GM12878 (cell line): ENCODE measurements at regions of chr1 and their contacts with region 1.

Region 1: GRCh38 chr1:212566522-212567479 is 41.8 kb upstream of the ATF3 start:
- DNase-seq: peak; percentile 92
- ATAC-seq: peak; percentile 98
- H3K4me3 ChIP-seq: peak overlapping the region; percentile 58
- H3K27ac ChIP-seq: peak overlapping the region; percentile 72
- H3K4me1 ChIP-seq: peaks cover 20% of the 10 kb centered on the region
- H3K27me3 ChIP-seq: no peaks in the 10 kb centered on the region
- CTCF ChIP-seq: no peak
- EP300 ChIP-seq: peak; percentile 93
- POLR2A ChIP-seq: 0 out of 2 replicates have a peak, but pooled peaks have one; percentile 27
- RAD21 ChIP-seq: no peak

Region 2: DNA sequence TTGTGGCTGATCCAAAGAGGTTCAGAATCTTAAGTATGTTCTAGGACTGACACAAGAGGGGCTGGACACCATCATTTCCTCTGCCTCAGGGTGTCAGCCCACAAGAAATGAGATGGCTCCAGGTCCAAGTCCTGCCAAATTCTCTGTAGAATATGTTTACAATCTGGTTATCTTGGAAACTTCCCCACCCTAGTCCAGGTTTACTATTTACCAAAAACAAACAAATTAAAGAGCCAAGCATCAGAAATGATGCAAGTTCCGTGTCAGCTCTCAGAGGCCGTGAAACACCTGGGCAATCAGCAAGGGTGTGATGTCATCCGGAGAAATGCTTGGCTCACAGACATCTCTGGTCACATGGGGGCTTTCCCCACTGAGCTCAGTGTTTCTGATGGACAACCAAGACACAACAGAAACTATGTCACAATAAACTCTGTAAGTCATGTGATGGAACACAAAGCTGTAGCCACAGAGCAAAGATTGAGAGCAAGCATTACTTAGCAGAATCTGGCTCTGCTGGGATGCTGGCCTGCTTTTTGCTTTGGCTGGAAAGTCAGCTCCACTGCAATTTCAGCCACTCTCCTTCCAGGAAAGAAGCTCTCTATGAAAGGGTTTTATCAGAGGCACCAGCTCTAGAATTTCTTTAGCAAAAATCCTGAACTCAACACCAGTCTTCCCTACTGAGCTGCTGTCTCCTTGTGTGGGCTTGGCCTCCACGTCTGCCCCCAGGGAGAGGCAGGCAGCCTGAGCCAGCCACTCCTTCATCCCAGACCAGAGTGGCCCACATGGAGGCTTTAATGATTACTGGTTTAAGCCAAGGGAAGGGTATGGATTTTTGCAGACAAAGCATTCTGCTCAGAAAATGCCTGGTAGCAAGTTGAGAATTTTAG is 78.2 kb before region 1 on chr1:
- CTCF ChIA-PET with region 1: no interaction called
- POLR2A ChIA-PET with region 1: interaction called, 5 read pairs
- RAD21 ChIA-PET with region 1: interaction called, 11 read pairs
- SMC1A ChIA-PET with region 1: no interaction called
- in situ Hi-C with region 1: no loop called
- intact Hi-C with region 1: no loop called
- DNase-seq: no peak
- ATAC-seq: peak; percentile 84
- H3K4me3 ChIP-seq: no peak overlapping the region
- H3K27ac ChIP-seq: no peak overlapping the region
- H3K4me1 ChIP-seq: no peaks in the 10 kb centered on the region
- H3K27me3 ChIP-seq: no peaks in the 10 kb centered on the region
- CTCF ChIP-seq: no peak
- EP300 ChIP-seq: peak in 1 of 2 experiments; percentile 63; a peak in 1 of 4 replicates
- POLR2A ChIP-seq: no peak
- RAD21 ChIP-seq: no peak

Region 3: DNA sequence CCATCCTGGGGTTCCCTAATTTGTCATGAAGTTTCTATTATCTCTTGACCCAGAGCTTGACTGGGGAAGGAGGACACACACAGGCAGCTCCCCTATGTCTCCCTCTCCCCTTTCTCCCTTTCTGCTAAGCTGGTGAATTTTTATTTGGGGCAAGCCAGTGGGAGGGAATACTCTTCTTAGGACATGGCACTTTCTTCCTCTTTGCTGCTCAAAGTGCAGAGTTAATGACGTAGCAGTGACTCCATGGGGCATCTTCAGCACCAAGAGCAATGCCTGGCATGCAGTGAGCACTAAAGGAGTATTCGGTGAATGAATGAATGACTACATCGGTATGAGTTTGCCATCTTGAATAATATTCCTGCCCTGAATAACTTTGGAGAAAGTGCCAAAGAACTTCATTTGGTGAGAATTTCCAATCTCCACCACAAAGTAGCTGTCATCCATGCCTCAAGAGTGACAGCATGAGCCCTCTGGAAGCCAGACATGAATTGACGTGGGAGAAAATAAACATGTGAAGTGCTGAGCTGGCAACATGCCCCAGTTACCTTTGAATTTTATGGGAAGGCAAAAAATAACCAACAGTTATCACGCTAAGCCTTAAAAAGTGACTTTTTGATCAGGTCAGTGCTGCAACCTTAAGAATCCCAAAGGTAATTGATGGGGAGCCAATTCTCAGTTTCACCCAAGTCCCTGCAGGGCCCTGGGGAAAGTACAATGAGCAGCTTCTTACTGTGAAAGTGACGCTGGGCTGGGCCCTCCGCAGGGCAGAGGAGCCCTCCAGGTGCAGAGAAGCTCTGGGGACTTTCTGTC is 19.6 kb after region 1 on chr1:
- CTCF ChIA-PET with region 1: interaction called, 18 read pairs
- POLR2A ChIA-PET with region 1: interaction called, 25 read pairs
- RAD21 ChIA-PET with region 1: interaction called, 33 read pairs
- SMC1A ChIA-PET with region 1: interaction called, 50 read pairs
- in situ Hi-C with region 1: no loop called
- intact Hi-C with region 1: loop called (anchors 1 kb)
- DNase-seq: peak; percentile 58
- ATAC-seq: peak; percentile 97
- H3K4me3 ChIP-seq: no peak overlapping the region
- H3K27ac ChIP-seq: peak overlapping the region; percentile 45
- H3K4me1 ChIP-seq: peaks cover 15% of the 10 kb centered on the region
- H3K27me3 ChIP-seq: no peaks in the 10 kb centered on the region
- CTCF ChIP-seq: no peak
- EP300 ChIP-seq: peak; percentile 80 to 83; a peak in 2 of 4 replicates
- POLR2A ChIP-seq: no peak
- RAD21 ChIP-seq: peak; percentile 31; the same call in 1 of the 2 replicates

Region 4: DNA sequence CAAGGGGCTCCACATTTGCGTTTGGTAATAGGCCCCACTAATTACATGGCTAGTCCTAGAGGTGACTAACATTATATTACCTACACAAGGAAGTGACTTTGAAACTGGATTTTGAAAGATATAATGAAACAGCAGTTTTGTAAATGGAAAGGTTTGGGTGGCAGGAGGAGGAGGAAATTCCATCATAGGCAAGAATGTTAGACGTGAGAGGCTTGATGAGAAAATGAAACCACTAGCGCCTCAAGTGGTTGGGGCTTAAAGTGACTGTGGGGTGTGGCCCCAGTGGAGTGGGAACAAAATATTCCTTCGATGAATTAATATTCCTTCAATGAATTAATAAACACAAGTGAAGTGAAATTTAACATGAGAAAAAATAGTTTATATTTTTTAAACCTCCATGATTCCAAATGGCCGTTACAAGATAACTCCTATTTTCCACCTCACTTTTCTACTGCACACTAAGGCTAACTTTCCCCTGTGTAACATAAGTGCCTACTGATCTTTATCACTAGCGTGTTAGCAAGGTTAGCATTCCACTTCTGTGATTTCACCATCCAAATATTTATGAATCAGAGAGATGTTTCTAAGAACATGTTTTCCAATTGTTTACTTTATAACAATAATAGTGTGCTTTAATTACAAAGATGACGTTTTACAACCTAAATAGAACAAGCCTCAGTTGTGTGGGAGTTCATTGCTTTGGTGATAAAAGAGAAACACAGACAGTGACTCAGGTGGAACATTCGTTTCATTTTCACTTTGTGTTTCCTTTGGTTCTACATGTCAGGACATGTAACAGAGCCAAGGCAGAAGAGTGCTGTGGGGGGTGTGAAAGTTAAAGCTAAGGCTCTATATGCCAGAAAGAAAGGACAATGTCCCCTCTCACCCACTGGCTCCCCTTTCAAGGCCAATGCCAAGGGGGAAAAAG is 29.2 kb after region 1 on chr1:
- CTCF ChIA-PET with region 1: interaction called, 12 read pairs
- POLR2A ChIA-PET with region 1: interaction called, 15 read pairs
- RAD21 ChIA-PET with region 1: interaction called, 13 read pairs
- SMC1A ChIA-PET with region 1: interaction called, 14 read pairs
- in situ Hi-C with region 1: no loop called
- intact Hi-C with region 1: loop called (anchors 1 kb)
- DNase-seq: peak; percentile 90
- ATAC-seq: peak; percentile 93
- H3K4me3 ChIP-seq: no peak overlapping the region
- H3K27ac ChIP-seq: peak overlapping the region; percentile 95
- H3K4me1 ChIP-seq: peaks cover 17% of the 10 kb centered on the region
- H3K27me3 ChIP-seq: no peaks in the 10 kb centered on the region
- CTCF ChIP-seq: peak; percentile 51 to 62 (median 61); a peak in 5 of 6 replicates
- EP300 ChIP-seq: peak; percentile 76 to 94
- POLR2A ChIP-seq: peak; percentile 39; the same call in 1 of the 2 replicates
- RAD21 ChIP-seq: peak; percentile 38

Region 5: GRCh38 chr1:212613455-212614390 is 46.9 kb after region 1 on chr1:
- CTCF ChIA-PET with region 1: interaction called, 4 read pairs
- POLR2A ChIA-PET with region 1: interaction called, 25 read pairs
- RAD21 ChIA-PET with region 1: interaction called, 10 read pairs
- SMC1A ChIA-PET with region 1: interaction called, 11 read pairs
- in situ Hi-C with region 1: no loop called
- intact Hi-C with region 1: loop called (anchors 1 kb)
- DNase-seq: no peak
- ATAC-seq: peak; percentile 8
- H3K4me3 ChIP-seq: peak overlapping the region; percentile 65; the same call in 1 of the 2 replicates
- H3K27ac ChIP-seq: peak overlapping the region; percentile 66
- H3K4me1 ChIP-seq: peaks cover 27% of the 10 kb centered on the region
- H3K27me3 ChIP-seq: no peaks in the 10 kb centered on the region
- CTCF ChIP-seq: no peak
- EP300 ChIP-seq: no peak
- POLR2A ChIP-seq: no peak
- RAD21 ChIP-seq: no peak